A673 (cell line): ENCODE measurements at regions of chr18 and their contacts with region 1.

Region 1: DNA sequence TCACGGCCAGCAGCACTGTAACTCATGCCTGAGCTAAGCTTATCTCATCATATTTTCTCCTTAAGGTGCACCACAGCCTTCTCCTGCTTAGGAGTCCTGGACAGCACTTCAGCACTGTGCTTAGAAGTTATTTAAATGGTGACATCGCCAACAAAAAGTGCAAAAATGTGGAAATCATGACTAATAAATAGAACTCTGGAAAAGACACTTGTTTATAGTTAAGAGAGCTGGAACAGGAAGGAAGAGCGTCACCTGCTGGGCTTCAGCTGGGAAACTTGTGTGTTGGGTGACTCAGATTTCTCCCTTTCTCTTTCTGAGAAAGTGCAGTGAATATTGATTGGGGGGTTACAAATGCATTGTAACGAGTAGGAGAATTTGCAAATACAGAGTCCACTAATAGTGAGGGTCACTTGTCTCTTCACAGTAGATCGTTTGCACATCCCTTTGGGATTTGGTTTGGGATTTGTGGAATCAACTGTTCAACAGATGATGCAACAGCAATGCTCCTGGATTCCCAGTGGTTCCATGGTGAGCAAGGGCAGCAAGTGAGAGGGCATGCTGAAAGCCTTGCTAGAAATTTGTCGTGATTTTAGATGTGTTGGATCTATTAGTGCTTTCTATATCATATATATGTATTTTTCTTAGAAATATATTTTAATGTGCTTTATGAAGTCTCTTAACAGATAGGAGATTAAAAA is 84.2 kb downstream of the DOK6 start:
- DNase-seq: peak; percentile 79
- H3K4me3 ChIP-seq: no peak overlapping the region
- H3K27ac ChIP-seq: peak overlapping the region; percentile 14
- H3K4me1 ChIP-seq: peaks cover 11% of the 10 kb centered on the region
- H3K27me3 ChIP-seq: no peaks in the 10 kb centered on the region
- CTCF ChIP-seq: peak; percentile 75

Region 2: DNA sequence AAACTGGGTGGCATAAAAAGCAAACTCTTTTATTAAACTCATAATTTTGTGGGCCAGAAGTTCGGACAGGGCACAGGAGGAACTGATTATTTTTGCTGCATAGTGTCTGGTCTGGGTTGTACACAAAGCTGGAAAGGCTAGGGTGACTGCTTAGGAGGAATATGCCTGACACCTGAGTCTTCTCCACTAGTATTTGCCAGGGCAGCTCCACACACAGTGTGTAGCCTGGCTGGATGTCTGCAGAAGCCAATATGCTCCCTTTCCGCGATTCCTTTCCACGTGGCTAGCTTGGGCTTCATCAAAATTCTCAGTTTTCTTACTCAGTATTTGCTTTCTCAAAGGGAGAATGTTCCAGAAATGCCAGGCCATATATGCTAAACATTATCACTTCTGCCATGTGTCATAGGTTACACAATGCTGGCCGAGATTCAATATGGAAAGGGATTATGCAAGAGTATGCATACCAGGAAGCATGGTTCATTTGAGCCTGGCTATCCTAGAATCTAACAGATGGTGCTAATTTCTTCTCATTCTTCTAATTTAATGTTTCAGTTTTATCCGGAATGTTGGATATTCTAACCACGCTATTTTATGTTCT is 226.9 kb before region 1 on chr18:
- CTCF ChIA-PET with region 1: no interaction called
- POLR2A ChIA-PET with region 1: no interaction called
- intact Hi-C with region 1: loop called (anchors 10 kb)
- DNase-seq: peak; percentile 77
- H3K4me3 ChIP-seq: no peak overlapping the region
- H3K27ac ChIP-seq: peak overlapping the region; percentile 56
- H3K4me1 ChIP-seq: peaks cover 13% of the 10 kb centered on the region
- H3K27me3 ChIP-seq: no peaks in the 10 kb centered on the region
- CTCF ChIP-seq: no peak

Region 3: DNA sequence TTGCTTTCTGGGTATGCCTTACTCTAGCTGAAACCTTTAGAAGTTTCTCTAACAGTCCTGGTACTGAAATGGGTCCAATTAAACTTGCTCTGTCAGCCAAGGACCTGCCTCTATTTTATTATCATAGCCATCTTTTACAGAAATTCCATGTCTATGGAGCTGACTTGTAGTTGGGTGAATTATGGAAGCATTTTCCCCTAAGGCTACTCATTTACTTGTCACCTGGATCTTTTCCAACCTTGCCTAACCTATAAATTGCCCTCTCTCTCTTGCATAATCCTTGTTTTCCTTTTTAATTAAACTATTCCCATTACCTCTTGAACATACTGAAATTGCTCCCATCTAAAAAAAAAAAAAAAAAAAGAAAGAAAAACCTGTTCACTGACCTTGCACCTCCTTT is 158.8 kb before region 1 on chr18:
- CTCF ChIA-PET with region 1: no interaction called
- POLR2A ChIA-PET with region 1: no interaction called
- intact Hi-C with region 1: no loop called
- DNase-seq: no peak
- H3K4me3 ChIP-seq: no peak overlapping the region
- H3K27ac ChIP-seq: no peak overlapping the region
- H3K4me1 ChIP-seq: no peaks in the 10 kb centered on the region
- H3K27me3 ChIP-seq: no peaks in the 10 kb centered on the region
- CTCF ChIP-seq: no peak